Right ventricle myocardium superior (tissue), 1 donor: ENCODE measurements at regions of chr13 and their contacts with region 1.

Region 1: DNA sequence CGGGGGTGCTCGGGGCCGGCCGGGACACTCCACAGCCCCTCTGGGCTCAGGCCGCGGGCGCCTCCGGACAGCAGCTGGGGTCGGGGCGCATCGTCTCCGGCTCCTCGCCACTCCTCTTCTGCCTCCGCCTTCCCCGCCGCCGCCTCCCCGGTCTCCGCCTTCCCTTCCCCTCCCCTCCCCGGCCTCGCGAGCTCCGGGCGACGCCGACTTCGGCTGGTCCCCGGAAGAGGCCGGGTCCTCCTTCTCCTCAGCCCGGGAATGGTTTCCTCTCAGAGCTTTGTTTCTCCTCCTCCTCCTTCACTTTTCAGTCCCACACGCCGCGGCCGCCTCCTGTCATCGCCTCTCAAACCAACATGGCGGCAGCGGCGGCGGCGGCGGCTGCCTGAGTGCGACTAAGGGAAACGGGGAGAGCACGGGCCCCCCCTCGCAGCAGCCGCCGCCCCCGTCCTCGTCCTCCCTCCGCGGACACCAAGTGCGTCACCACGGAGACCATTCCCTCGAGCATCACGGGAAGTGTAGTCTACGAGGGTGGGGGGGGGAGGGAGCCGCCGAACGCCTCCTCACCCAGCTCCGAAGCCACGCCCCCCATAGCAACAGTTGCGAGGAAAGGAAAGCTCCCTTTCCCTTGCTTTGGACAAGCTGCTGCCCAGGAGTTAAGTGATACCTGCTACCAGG is at the start of gene UBL3:
- DNase-seq: peak; percentile 97
- ATAC-seq: peak; percentile 95
- total RNA-seq, gene UBL3: 21.1 TPM

Region 2: GRCh38 chr13:29532116-29532515 is 318.2 kb before region 1 on chr13:
- intact Hi-C with region 1: no loop called
- DNase-seq: no peak
- ATAC-seq: no peak

Region 3: GRCh38 chr13:29771247-29771646 is 79.1 kb before region 1 on chr13:
- intact Hi-C with region 1: loop called (anchors 5 kb)
- DNase-seq: no peak
- ATAC-seq: peak; percentile 34

Region 4: GRCh38 chr13:30033681-30034457 is 183.5 kb after region 1 on chr13:
- intact Hi-C with region 1: no loop called
- DNase-seq: no peak
- ATAC-seq: peak; percentile 20

Region 5: GRCh38 chr13:30120133-30120822 is 269.9 kb after region 1 on chr13:
- intact Hi-C with region 1: no loop called
- DNase-seq: no peak
- ATAC-seq: no peak